ENCODE measurements at regions of chrX and their contacts with region 1.

Region 1: DNA sequence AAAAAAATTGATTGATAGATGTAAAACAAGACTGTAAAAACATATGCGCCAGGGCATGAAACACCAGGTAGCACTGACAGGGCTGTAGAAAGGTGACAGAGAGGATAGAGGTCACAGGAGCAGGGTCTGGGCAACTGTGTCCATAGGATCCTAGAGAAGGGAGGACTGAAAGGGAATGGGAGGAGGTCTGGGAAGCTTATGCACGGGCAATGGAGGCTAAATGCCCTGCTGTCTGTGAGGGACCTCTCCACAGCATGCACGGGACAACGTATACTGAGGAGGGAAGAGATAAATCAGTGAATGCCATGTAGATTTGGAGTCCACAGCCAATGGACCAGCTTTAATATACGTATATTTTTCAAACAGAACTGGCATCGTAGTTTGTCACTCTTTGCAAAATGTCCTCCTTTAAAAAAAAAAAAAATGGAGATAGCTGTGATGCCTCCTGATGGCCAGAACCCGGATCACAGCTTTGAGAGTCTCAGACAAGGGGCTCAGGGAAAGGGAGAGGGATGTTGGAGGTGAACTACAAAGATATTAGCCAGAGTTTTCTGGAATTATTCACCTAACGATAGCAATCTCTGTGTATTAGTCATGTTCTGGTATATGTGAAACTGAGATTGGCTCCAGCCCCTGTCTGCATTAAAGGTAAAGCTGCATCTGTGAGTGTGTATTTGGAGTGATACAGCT is 16.0 kb downstream of the RAB40A start:
- DNase-seq: peak; percentile 60
- H3K4me3 ChIP-seq: no peak overlapping the region
- H3K27ac ChIP-seq: no peak overlapping the region
- H3K4me1 ChIP-seq: peaks cover 4% of the 10 kb centered on the region
- H3K27me3 ChIP-seq: peaks cover 1% of the 10 kb centered on the region
- CTCF ChIP-seq: no peak

Region 2: GRCh38 chrX:103431316-103431715 is 72.0 kb before region 1 on chrX:
- CTCF ChIA-PET with region 1: no interaction called
- dilution Hi-C with region 1: no loop called
- in situ Hi-C with region 1: no loop called
- intact Hi-C with region 1: no loop called
- DNase-seq: peak; percentile 28
- H3K4me3 ChIP-seq: no peak overlapping the region
- H3K27ac ChIP-seq: no peak overlapping the region
- H3K4me1 ChIP-seq: no peaks in the 10 kb centered on the region
- H3K27me3 ChIP-seq: no peaks in the 10 kb centered on the region
- CTCF ChIP-seq: no peak

Region 3: DNA sequence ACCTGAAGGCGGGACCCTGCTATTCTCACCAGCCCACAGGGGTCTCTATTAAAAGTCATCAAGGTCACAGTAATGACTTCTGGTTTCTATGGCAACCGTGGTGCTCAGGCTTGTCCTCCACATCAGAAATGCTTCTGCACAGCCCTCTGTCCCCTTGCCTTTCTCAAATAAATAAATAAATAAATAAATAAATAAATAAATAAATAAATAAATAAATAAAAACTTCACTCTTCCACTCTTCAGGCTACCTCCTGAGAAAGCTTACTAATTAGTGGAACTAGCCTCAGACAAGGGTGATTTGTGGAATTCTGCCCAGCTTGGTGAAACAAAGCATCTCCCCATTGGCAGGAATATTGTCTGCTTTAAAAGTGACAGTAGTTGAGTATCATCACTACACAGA is 21.4 kb after region 1 on chrX:
- CTCF ChIA-PET with region 1: interaction called, 12 read pairs
- dilution Hi-C with region 1: no loop called
- in situ Hi-C with region 1: no loop called
- intact Hi-C with region 1: no loop called
- DNase-seq: no peak
- H3K4me3 ChIP-seq: no peak overlapping the region
- H3K27ac ChIP-seq: no peak overlapping the region
- H3K4me1 ChIP-seq: no peaks in the 10 kb centered on the region
- H3K27me3 ChIP-seq: no peaks in the 10 kb centered on the region
- CTCF ChIP-seq: no peak

Measured in mammary epithelial cell (primary cell).